ENCODE measurements at regions of chr1 and their contacts with region 1.

Region 1: GRCh38 chr1:15128520-15129313 is 24.8 kb upstream of the TMEM51 start:
- DNase-seq: peak; percentile 38
- ATAC-seq: peak; percentile 100
- H3K4me3 ChIP-seq: no peak overlapping the region
- H3K27ac ChIP-seq: no peak overlapping the region
- H3K4me1 ChIP-seq: no peaks in the 10 kb centered on the region
- H3K27me3 ChIP-seq: no peaks in the 10 kb centered on the region
- CTCF ChIP-seq: peak; percentile 92 to 96 (median 93)
- EP300 ChIP-seq: no peak
- POLR2A ChIP-seq: no peak
- RAD21 ChIP-seq: peak; percentile 95

Region 2: DNA sequence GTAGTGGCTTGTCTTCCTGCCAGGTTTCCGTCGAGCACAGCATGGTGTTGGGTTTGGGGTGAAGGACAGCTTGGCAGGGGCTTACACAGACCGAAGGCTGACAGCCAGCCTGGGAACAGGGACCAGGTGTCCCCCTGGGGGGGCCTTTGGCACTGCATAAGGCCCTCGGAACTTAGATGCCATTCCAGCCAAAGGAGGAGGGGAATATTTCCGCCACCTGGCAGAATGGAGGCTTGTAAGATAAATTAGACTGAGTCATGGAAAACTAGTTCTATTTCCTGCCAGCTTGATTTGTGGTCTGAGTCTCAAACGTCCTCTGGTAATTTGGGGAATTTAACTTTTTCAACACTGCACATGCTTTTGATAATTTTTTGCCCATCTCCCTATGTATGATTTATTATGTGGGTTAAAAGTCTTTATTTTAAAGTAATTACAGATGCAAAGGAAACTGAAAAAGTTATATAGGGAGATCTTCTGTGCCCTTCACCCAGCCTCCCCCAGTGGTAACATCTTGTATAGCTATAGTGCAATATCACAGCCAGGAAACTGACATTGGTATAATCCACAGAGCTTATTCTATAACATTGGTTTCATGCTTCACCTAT is 13.3 kb after region 1 on chr1:
- CTCF ChIA-PET with region 1: interaction called, 10 read pairs
- POLR2A ChIA-PET with region 1: no interaction called
- RAD21 ChIA-PET with region 1: interaction called, 10 read pairs
- SMC1A ChIA-PET with region 1: interaction called, 12 read pairs
- in situ Hi-C with region 1: no loop called
- intact Hi-C with region 1: no loop called
- DNase-seq: no peak
- ATAC-seq: 0 out of 3 replicates have a peak, but pooled peaks have one; percentile 29
- H3K4me3 ChIP-seq: no peak overlapping the region
- H3K27ac ChIP-seq: no peak overlapping the region
- H3K4me1 ChIP-seq: peaks cover 4% of the 10 kb centered on the region
- H3K27me3 ChIP-seq: no peaks in the 10 kb centered on the region; a peak in 1 of 4 replicates
- CTCF ChIP-seq: no peak
- EP300 ChIP-seq: no peak
- POLR2A ChIP-seq: no peak
- RAD21 ChIP-seq: no peak

Region 3: DNA sequence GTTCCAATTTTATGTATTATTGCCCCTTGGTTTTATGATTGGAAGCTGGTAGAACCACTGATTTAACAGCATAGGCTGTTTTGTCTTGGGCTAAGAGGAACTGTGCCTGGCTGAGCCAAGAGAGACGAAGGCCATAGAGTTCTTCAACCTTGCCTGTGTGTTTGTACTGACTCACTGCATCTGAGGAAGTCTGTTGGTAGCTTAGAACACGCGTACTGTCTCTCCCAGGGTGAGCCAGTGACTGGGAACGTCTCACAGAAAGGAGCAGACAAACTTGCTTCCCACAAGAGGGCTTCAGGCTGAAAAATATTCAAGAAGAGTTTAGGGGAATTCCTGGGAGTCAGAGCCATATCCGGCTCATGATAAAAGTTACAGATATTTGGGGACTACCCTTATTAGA is 39.8 kb after region 1 on chr1:
- CTCF ChIA-PET with region 1: interaction called, 12 read pairs
- POLR2A ChIA-PET with region 1: no interaction called
- RAD21 ChIA-PET with region 1: interaction called, 4 read pairs
- SMC1A ChIA-PET with region 1: interaction called, 6 read pairs
- in situ Hi-C with region 1: no loop called
- intact Hi-C with region 1: no loop called
- DNase-seq: peak; percentile 63
- ATAC-seq: peak; percentile 82
- H3K4me3 ChIP-seq: no peak overlapping the region
- H3K27ac ChIP-seq: peak overlapping the region; percentile 47
- H3K4me1 ChIP-seq: peaks cover 13% of the 10 kb centered on the region
- H3K27me3 ChIP-seq: no peaks in the 10 kb centered on the region
- CTCF ChIP-seq: no peak
- EP300 ChIP-seq: no peak
- POLR2A ChIP-seq: no peak
- RAD21 ChIP-seq: no peak

Region 4: DNA sequence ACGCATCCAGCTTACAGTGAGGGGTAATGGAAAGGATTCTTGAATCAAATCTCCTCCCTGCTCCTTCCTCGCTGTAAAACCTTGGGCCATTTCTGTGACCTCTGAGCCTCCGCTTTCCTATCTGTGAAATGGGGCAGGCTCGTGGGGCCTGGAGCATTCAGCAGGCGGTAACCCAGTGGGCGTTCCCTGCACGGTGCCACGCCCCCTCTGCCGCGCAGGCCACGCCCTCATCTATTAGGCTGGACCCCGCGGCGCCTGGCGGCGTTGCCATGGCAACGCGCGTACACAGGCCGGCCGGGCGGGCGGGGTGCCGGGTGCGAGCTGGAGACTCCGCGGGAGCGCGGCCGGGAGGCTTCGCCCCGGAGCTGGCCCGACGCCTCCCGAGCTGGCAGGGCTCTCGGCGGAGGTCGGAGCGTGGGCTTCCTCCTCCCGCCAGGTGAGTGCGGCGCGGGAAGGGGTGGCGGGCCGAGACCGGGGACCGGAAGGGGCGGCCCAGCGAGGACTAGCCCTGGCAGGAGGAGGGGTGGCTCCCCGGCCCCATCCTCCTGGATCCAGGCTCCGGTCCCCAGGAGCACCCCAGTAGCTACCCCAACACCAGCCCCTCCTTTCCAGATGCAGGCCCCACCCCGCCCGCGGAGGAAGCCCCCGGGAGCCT is 118.4 kb after region 1 on chr1 and contains the start of gene FHAD1:
- CTCF ChIA-PET with region 1: interaction called, 8 read pairs
- POLR2A ChIA-PET with region 1: no interaction called
- RAD21 ChIA-PET with region 1: interaction called, 10 read pairs
- SMC1A ChIA-PET with region 1: interaction called, 9 read pairs
- in situ Hi-C with region 1: no loop called
- intact Hi-C with region 1: no loop called
- DNase-seq: no peak
- ATAC-seq: peak; percentile 73
- H3K4me3 ChIP-seq: peak within 1 kb of the TSS; percentile 28; the same call in 1 of the 2 replicates
- H3K27ac ChIP-seq: no peak within 1 kb of the TSS
- H3K4me1 ChIP-seq: peaks cover 20% of the 10 kb centered on the region
- H3K27me3 ChIP-seq: no peaks in the 10 kb centered on the region
- CTCF ChIP-seq: no peak
- EP300 ChIP-seq: no peak
- POLR2A ChIP-seq: no peak
- RAD21 ChIP-seq: no peak
- polyA plus RNA-seq, gene FHAD1: 0.09 TPM in 1 of 2 experiments, not detected in the other

Region 5: DNA sequence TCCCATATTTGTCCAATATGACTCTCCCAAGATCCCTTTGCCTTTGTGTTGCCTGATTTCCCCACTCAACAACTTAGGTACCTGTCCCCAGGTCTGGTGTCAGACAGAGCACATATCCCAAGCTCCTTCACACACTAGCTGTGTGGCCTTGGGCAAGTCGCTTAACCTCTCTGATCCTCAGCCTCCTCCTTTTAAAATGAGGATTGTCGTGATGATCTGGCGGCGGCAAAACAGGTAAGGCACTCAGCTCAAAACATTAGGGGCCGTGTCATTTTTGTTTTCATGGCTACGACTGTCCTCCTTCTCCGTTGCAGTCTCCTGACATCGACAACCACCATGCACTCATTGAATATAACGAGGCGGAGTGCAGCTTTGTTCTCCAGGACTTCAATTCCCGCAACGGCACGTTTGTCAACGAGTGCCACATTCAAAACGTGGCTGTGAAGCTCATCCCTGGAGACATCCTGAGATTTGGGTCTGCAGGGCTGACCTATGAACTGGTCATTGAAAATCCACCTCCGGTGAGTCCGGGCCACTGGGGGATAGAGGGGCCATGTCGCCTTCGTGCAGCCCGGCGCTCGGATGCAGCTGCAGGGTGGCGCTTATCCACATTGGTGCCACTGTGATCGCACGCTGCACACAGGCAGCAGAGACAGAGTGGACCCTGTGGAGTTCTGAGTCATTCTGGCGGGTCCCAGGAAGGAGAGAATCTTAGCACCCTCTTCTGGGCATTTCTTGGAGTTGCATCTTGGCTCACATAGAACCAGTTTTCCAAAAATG is 143.5 kb after region 1 on chr1:
- CTCF ChIA-PET with region 1: interaction called, 219 read pairs
- POLR2A ChIA-PET with region 1: interaction called, 4 read pairs
- RAD21 ChIA-PET with region 1: interaction called, 166 read pairs
- SMC1A ChIA-PET with region 1: interaction called, 171 read pairs
- in situ Hi-C with region 1: loop called (anchors 5 kb)
- intact Hi-C with region 1: loop called (anchors 1 kb)
- DNase-seq: no peak
- ATAC-seq: peak; percentile 96
- H3K4me3 ChIP-seq: no peak overlapping the region
- H3K27ac ChIP-seq: no peak overlapping the region
- H3K4me1 ChIP-seq: no peaks in the 10 kb centered on the region
- H3K27me3 ChIP-seq: no peaks in the 10 kb centered on the region
- CTCF ChIP-seq: peak; percentile 75 to 89 (median 83)
- EP300 ChIP-seq: no peak
- POLR2A ChIP-seq: no peak
- RAD21 ChIP-seq: peak; percentile 97

Region 6: DNA sequence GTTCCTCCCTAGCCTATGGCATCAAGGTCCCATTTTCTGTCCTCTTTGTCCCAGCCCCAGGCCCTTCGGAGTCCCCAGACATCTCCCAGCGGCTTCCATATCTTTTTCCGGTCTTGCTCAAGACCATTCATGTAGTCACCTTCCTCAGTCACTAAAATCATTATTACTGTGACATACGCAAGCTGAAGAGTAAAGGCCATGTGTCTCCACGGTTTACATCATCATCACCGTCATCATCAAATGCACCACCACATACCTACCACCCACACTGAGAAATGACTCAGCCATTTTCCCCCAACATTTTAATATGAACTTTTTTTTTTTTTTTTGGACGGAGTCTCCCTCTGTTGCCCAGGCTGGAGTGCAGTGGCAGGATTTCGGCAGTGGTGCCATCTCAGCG is 161.7 kb after region 1 on chr1:
- CTCF ChIA-PET with region 1: interaction called, 10 read pairs
- POLR2A ChIA-PET with region 1: no interaction called
- RAD21 ChIA-PET with region 1: interaction called, 3 read pairs
- SMC1A ChIA-PET with region 1: no interaction called
- in situ Hi-C with region 1: no loop called
- intact Hi-C with region 1: no loop called
- DNase-seq: no peak
- ATAC-seq: peak; percentile 64
- H3K4me3 ChIP-seq: no peak overlapping the region
- H3K27ac ChIP-seq: no peak overlapping the region
- H3K4me1 ChIP-seq: no peaks in the 10 kb centered on the region
- H3K27me3 ChIP-seq: no peaks in the 10 kb centered on the region
- CTCF ChIP-seq: no peak
- EP300 ChIP-seq: no peak
- POLR2A ChIP-seq: no peak
- RAD21 ChIP-seq: no peak

Region 7: DNA sequence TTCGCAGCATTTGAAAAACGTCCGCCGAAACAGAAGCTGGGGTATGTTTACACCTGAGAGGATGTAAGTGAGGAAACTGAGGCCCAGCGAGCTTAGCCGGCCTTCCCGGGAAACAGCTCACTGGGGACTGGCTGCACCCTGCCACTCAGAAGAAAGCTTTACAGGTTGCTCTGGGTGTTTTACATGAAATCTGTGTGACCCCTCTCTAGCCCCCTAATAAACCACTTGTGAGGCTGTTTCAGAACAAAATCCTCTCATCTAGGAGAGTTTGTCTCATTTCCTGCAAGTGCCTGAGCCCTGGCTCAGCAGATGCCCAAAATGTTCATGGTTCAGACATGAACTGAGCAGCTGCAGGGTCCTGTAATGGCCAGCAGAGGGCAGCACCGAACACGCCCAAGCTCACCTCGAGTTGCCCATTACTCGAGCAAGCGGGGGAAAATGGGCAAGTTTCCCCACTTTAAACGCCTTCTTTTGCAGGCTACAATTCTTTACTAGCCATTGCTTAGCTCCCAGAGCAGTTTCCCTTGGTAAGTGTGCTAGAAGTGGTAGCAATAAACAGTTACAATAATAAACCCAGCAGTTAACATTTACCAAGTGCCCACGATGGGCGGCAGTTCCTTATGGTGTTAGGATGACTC is 194.8 kb after region 1 on chr1:
- CTCF ChIA-PET with region 1: interaction called, 16 read pairs
- POLR2A ChIA-PET with region 1: no interaction called
- RAD21 ChIA-PET with region 1: interaction called, 4 read pairs
- SMC1A ChIA-PET with region 1: no interaction called
- in situ Hi-C with region 1: no loop called
- intact Hi-C with region 1: no loop called
- DNase-seq: no peak
- ATAC-seq: peak; percentile 98
- H3K4me3 ChIP-seq: no peak overlapping the region
- H3K27ac ChIP-seq: no peak overlapping the region
- H3K4me1 ChIP-seq: no peaks in the 10 kb centered on the region
- H3K27me3 ChIP-seq: no peaks in the 10 kb centered on the region; a peak in 1 of 4 replicates
- CTCF ChIP-seq: peak; percentile 94 to 99 (median 94)
- EP300 ChIP-seq: no peak
- POLR2A ChIP-seq: no peak
- RAD21 ChIP-seq: peak; percentile 87

Measured in GM12878 (cell line).